Activated CD4-positive, alpha-beta memory T cell treated with anti-CD3 and anti-CD28 coated beads for 36 hours (primary cell): ENCODE measurements at regions of chr21 and their contacts with region 1.

Region 1: DNA sequence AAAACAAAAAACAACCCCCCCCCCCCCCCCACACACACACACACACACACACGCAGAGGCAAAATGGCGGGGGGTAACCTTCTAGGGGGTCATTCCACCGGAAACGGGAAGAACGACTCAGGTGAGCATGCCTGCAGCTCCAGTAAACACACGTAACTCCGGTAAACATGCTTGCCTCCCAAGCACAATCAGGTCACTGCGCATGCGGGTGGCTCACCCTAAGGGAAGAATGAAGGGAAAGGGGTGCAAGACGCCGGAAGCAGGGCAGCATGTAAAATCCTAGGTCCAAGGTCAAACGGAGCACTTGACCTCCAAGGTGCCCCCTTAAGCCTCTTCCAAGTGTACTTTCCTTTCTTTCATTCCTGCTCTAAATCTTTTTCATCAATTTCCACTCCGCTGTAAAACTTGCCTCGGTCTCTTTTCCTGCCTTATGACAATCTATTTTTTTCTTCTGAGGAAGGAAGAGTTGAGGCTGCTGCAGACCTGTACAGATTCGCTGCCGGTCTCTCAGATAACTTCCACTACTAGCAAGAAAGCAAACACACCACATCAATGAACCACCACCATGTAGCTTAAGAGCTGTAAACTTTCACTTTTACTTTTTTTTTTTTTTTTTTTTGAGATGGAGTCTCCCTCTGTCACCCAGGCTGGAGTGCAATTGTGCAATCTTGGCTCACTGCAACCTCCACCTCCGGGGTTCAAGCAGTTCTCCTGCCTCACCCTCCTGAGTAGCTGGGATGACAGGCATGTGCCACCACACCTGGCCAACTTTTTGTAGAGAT is 21.0 kb upstream of the CBR3 start:
- DNase-seq: peak; percentile 43
- H3K4me3 Mint-ChIP-seq: peak overlapping the region; percentile 76
- H3K27ac Mint-ChIP-seq: peak overlapping the region; percentile 28
- H3K4me1 Mint-ChIP-seq: peaks cover 10% of the 10 kb centered on the region
- H3K27me3 Mint-ChIP-seq: no peaks in the 10 kb centered on the region

Region 2: DNA sequence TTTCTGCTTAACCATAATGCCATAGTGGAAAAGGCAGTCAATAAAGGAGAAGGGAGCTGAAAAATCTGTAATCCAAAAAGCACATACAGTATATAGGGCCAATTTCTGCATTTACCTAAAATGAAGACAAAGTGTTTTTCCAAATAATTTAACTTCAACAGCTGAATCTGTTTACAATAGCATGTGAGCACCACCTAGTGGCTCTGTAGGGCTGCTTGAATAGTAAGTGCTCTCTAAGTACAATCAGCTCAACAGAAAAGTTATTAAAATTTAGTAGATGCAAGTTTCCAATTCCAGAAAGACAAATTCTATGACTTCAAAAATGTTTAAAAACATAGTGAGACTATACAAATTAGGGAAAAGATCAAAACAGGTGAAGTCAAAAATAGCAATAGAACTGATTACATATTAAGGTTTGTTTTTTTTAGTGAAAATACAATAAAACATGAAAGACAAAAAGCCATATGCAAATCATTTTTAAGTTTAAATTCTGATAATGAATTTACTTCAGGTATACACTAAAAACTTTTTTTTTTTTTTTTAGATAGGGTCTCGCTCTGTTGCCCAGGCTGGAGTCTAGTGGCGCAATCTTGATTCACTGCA is 273.5 kb before region 1 on chr21:
- CTCF ChIA-PET with region 1: no interaction called
- POLR2A ChIA-PET with region 1: no interaction called
- intact Hi-C with region 1: loop called (anchors 10 kb)
- DNase-seq: peak; percentile 51
- H3K4me3 Mint-ChIP-seq: no peak overlapping the region
- H3K27ac Mint-ChIP-seq: no peak overlapping the region
- H3K4me1 Mint-ChIP-seq: no peaks in the 10 kb centered on the region
- H3K27me3 Mint-ChIP-seq: peaks cover 1% of the 10 kb centered on the region

Region 3: DNA sequence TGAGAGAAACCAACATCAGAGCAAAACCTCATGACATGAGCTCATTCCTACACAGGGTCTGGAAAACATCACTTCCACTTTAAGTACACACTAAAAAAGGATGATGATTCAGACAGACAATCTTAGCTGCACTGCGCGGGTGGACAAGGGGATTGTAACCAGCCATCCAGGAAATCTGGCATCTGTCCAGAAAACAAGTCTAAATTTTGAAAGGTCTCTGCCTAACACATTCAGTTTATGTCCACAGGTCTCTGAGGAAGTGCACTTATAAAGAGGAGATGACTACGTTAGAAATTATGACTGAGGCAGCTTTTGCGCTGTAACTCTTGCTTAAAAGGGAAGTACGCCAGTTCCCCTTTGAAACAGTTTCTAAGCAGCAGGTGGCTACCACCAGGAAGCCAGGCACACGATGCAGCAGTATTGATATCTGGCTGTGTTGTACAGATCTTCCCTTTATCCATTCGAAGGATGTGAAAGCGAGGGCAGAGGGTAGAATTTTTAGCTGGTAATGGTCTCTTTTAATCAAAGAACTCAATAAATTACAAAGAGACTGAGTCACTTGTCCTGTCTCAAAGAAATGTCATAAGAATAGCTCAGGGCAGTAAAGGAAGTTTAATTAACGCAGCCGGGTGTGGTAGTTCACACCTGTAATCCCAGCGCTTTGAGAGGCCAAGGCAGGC is 181.5 kb before region 1 on chr21:
- CTCF ChIA-PET with region 1: no interaction called
- POLR2A ChIA-PET with region 1: no interaction called
- intact Hi-C with region 1: loop called (anchors 10 kb)
- DNase-seq: peak; percentile 59
- H3K4me3 Mint-ChIP-seq: no peak overlapping the region
- H3K27ac Mint-ChIP-seq: no peak overlapping the region
- H3K4me1 Mint-ChIP-seq: no peaks in the 10 kb centered on the region
- H3K27me3 Mint-ChIP-seq: no peaks in the 10 kb centered on the region

Region 4: GRCh38 chr21:36028127-36029069 is 85.4 kb before region 1 on chr21:
- CTCF ChIA-PET with region 1: interaction called, 16 read pairs
- POLR2A ChIA-PET with region 1: no interaction called
- intact Hi-C with region 1: loop called (anchors 1 kb)
- DNase-seq: peak; percentile 77
- H3K4me3 Mint-ChIP-seq: no peak overlapping the region
- H3K27ac Mint-ChIP-seq: no peak overlapping the region
- H3K4me1 Mint-ChIP-seq: peaks cover 4% of the 10 kb centered on the region
- H3K27me3 Mint-ChIP-seq: no peaks in the 10 kb centered on the region

Region 5: GRCh38 chr21:36060159-36060921 is 53.5 kb before region 1 on chr21 and contains the start of gene SETD4:
- CTCF ChIA-PET with region 1: interaction called, 19 read pairs
- POLR2A ChIA-PET with region 1: no interaction called
- intact Hi-C with region 1: loop called (anchors 2 kb)
- DNase-seq: peak; percentile 94
- H3K4me3 Mint-ChIP-seq: peak within 1 kb of the TSS; percentile 82
- H3K27ac Mint-ChIP-seq: peak within 1 kb of the TSS; percentile 90
- H3K4me1 Mint-ChIP-seq: peaks cover 21% of the 10 kb centered on the region
- H3K27me3 Mint-ChIP-seq: no peaks in the 10 kb centered on the region
- total RNA-seq, gene SETD4: 13.5 to 18.9 TPM

Region 6: DNA sequence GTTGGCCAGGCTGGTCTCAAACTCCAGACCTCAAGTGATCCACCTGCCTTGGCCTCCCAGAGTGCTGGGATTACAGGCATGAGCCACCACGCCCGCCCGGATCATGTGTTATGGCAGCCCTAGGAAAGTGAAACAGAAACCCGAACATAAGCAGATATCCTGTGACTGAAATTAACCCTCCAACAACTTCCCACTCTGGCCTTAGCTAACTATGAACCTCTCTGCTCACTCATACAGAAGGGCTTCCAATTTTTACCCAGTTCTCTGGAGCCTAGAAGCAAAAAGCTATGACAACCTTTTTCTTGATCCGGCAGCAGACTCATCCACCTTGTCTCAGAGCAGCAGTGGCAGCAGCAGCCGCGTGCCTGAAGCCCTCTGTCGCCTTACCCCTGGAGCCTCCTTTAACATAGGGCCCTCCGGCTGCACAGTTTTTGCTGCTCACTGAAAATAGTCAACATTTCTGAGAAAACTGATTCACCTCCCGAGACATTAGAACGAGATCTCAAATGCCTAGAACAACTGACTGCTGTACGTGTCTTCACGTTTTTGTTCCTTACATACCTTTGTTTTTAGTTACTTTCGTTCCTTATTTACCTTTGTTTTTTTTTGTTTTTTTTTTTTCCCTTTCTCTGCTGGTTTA is 34.7 kb before region 1 on chr21:
- CTCF ChIA-PET with region 1: interaction called, 11 read pairs
- POLR2A ChIA-PET with region 1: no interaction called
- intact Hi-C with region 1: no loop called
- DNase-seq: peak; percentile 64
- H3K4me3 Mint-ChIP-seq: peak overlapping the region; percentile 64
- H3K27ac Mint-ChIP-seq: peak overlapping the region; percentile 91
- H3K4me1 Mint-ChIP-seq: peaks cover 31% of the 10 kb centered on the region
- H3K27me3 Mint-ChIP-seq: no peaks in the 10 kb centered on the region

Region 7: DNA sequence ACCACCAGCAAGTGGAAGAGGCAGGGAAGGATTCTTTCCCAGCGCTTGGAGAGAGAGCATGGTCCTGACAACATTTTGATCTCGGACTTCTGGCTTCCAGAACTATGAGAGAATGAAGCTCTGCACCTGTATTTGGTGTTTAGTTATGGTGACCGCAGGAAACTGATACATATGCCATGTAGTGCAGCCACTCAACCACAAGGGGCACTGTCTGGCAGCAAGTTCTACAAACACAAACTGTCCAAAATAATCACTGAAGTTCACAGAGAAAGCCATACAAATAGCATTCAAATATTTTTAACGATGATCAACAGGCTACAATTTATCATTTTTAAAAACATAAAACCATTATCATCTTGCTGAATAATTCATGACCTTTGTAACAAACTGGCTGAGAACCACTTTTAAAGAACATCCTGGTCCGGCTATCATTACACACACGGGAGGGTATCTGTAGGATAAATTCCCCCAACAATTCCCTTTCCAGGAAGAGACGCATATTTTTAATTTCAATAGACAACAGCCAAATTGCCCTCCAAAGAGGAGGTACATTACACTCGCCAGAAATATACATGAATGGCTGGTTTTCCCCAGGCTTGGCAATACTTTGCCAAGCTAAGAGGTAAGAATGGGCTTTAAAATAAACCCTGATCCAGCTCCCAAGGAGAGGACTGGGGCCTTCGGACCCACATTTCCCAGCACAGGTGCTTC is 11.8 kb after region 1 on chr21:
- CTCF ChIA-PET with region 1: interaction called, 16 read pairs
- POLR2A ChIA-PET with region 1: no interaction called
- intact Hi-C with region 1: no loop called
- DNase-seq: peak; percentile 70
- H3K4me3 Mint-ChIP-seq: no peak overlapping the region
- H3K27ac Mint-ChIP-seq: no peak overlapping the region
- H3K4me1 Mint-ChIP-seq: peaks cover 10% of the 10 kb centered on the region
- H3K27me3 Mint-ChIP-seq: no peaks in the 10 kb centered on the region

Region 8: GRCh38 chr21:36141513-36141925 is 27.7 kb after region 1 on chr21:
- CTCF ChIA-PET with region 1: no interaction called
- POLR2A ChIA-PET with region 1: no interaction called
- intact Hi-C with region 1: no loop called
- DNase-seq: peak; percentile 89
- H3K4me3 Mint-ChIP-seq: no peak overlapping the region
- H3K27ac Mint-ChIP-seq: peak overlapping the region; percentile 64
- H3K4me1 Mint-ChIP-seq: peaks cover 24% of the 10 kb centered on the region
- H3K27me3 Mint-ChIP-seq: no peaks in the 10 kb centered on the region

Region 9: GRCh38 chr21:36337099-36337509 is 223.3 kb after region 1 on chr21:
- CTCF ChIA-PET with region 1: no interaction called
- POLR2A ChIA-PET with region 1: no interaction called
- intact Hi-C with region 1: no loop called
- DNase-seq: no peak
- H3K4me3 Mint-ChIP-seq: no peak overlapping the region
- H3K27ac Mint-ChIP-seq: peak overlapping the region; percentile 56
- H3K4me1 Mint-ChIP-seq: peaks cover 24% of the 10 kb centered on the region
- H3K27me3 Mint-ChIP-seq: no peaks in the 10 kb centered on the region